Right cardiac atrium (tissue), 5 donors: ENCODE measurements at regions of chr19 and their contacts with region 1.

Region 1: GRCh38 chr19:48152551-48152950 is 17.6 kb downstream of the LIG1 start:
- DNase-seq: peak in 2 of 3 donors; percentile 46 to 82
- ATAC-seq: peak; percentile 36 to 59
- H3K4me3 ChIP-seq: no peak overlapping the region
- H3K27ac ChIP-seq: no peak overlapping the region
- H3K4me1 ChIP-seq: no peaks in the 10 kb centered on the region
- H3K27me3 ChIP-seq: no peaks in the 10 kb centered on the region

Region 2: DNA sequence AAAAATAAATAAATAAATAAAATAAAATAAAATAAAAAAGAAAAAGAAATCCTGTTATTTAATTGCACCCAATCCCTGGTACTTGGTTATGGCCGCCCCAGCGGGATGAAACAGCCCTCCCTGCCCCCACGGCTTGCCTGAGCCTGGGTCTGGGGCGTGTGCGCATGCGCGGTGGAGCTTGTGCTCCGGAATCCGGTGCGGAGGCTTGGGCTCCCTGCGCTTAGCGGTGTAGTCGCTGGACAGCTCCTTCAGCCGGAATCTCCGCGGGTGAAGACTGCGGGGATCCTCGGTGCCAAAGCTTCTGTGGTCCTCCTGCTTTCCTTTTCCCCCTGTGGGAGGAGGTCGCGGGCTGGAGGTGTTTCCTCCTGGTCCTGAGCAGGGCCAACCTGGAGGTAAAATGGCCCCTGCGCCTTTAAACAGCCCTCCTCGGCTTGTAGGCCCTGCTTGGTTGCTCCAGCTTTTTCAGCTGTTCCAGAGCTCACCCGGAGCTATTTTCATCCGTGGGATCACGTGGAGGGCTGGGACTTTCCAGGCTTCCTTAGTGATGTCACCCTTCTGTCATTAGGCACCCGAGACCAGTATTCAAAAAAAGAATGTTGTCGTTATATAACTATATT is 42.1 kb before region 1 on chr19 and contains the start of gene PLA2G4C:
- intact Hi-C with region 1: loop called (anchors 2 to 5 kb)
- DNase-seq: peak; percentile 95 to 97 (median 97)
- ATAC-seq: peak; percentile 94
- H3K4me3 ChIP-seq: peak within 1 kb of the TSS; percentile 55
- H3K27ac ChIP-seq: peak within 1 kb of the TSS; percentile 100
- H3K4me1 ChIP-seq: peaks cover 3% of the 10 kb centered on the region
- H3K27me3 ChIP-seq: no peaks in the 10 kb centered on the region
- total RNA-seq, gene PLA2G4C: 24.7 to 39.6 (median 29.3) TPM

Region 3: GRCh38 chr19:48117515-48118130 is 34.9 kb before region 1 on chr19:
- intact Hi-C with region 1: loop called in 1 of 4 experiments (anchors 5 kb)
- DNase-seq: peak in 1 of 3 donors; percentile 40
- ATAC-seq: no peak
- H3K4me3 ChIP-seq: no peak overlapping the region
- H3K27ac ChIP-seq: no peak overlapping the region
- H3K4me1 ChIP-seq: no peaks in the 10 kb centered on the region
- H3K27me3 ChIP-seq: no peaks in the 10 kb centered on the region